ENCODE measurements at regions of chr22 and their contacts with region 1.

Region 1: GRCh38 chr22:32655068-32655467 is 146.4 kb upstream of the TIMP3 start:
- DNase-seq: no peak
- ATAC-seq: no peak

Region 2: GRCh38 chr22:32411829-32412592 is 243.1 kb before region 1 on chr22 and contains the start of gene RTCB:
- intact Hi-C with region 1: no loop called
- DNase-seq: peak; percentile 91 to 96
- ATAC-seq: peak; percentile 69
- total RNA-seq, gene RTCB: 87.2 to 117 TPM

Region 3: GRCh38 chr22:32781695-32782094 is 126.6 kb after region 1 on chr22:
- intact Hi-C with region 1: no loop called
- DNase-seq: no peak
- ATAC-seq: no peak

Region 4: GRCh38 chr22:32985899-32986765 is 331.1 kb after region 1 on chr22:
- intact Hi-C with region 1: loop called in 1 of 2 experiments (anchors 5 kb)
- DNase-seq: peak; percentile 51 to 53
- ATAC-seq: peak; percentile 95

Region 5: DNA sequence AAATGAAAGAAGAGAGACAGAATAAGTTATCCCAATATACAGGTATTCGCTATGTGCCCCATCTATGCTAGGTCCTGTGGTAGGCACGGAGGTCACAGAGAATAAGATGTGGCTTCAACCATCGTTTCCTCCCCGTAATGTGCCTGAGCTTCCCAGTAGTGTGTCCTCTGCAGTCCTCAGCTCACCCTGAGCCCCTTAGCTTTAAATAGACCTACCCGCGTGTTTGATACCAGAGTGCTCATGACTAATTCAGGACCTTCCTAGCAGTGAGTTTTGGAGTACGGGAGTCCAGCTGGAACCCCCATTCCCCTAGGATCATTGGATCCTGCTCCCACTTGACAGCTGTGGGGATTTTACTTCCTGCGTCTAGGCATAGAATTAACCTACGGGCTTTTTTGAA is 440.6 kb after region 1 on chr22:
- intact Hi-C with region 1: no loop called
- DNase-seq: no peak
- ATAC-seq: no peak

Measured in left colon (tissue), 2 donors.